ENCODE measurements at regions of chr20 and their contacts with region 1.

Region 1: DNA sequence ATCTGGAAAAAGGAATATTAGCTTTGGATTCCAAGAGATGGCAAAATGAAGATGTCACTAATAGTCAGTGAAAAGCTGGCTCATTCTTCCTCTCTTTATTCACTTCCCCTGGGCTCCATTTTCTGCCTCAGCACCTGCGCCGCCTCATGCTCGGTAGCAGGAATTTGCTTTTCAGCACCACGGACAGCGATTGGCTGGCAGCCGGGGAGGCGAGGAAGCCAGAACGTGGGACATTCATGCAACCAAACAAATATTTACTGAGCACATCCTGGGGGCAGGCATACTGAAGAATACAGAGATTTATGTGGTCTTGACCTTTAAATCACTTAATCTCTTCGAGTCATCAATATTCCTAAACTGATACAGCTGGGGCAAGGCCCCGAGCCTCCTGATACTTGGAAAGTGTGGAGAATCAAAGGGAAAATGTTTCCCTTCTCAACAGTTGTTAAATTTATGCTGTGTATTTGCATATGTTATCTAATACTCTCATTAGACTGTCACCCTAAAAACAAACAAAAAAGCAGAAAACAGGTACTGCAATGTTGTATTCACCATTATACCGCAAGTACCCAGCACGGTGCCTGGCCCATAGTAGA is 12.1 kb upstream of the PDYN start:
- DNase-seq: peak in 1 of 2 experiments; percentile 55
- ATAC-seq: peak in 1 of 2 experiments; percentile 65; a peak in 3 of 6 replicates
- H3K4me3 ChIP-seq: no peak overlapping the region
- H3K27ac ChIP-seq: no peak overlapping the region
- H3K4me1 ChIP-seq: no peaks in the 10 kb centered on the region
- CTCF ChIP-seq: no peak
- EP300 ChIP-seq: no peak
- POLR2A ChIP-seq: no peak
- RAD21 ChIP-seq: no peak

Region 2: DNA sequence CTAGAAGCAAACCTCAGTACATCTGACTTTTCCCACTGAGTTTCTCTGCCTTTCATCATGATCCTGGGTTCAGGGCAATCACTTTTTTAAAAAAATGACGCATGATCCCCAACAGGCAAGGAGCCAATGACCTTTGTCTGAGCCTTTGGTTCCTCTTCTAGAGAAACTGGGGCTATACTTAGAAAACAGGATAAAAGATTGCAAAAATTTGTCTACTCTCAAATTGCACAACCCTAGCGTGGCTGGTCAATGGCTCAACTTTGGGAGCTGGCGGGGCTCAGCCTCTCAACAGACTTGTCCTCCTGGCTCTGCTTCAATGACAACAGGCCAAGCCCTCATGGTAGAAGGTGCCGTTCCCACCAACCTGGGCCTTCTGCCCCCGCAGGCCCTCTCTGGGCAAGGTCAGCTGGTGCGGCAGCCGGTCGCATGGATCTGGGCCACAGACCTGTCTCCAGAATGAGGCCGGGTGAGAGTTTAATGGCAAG is 60.8 kb before region 1 on chr20:
- CTCF ChIA-PET with region 1: no interaction called
- POLR2A ChIA-PET with region 1: no interaction called
- DNase-seq: no peak
- ATAC-seq: no peak
- H3K4me3 ChIP-seq: no peak overlapping the region
- H3K27ac ChIP-seq: no peak overlapping the region
- H3K4me1 ChIP-seq: no peaks in the 10 kb centered on the region
- CTCF ChIP-seq: no peak
- EP300 ChIP-seq: no peak
- POLR2A ChIP-seq: no peak
- RAD21 ChIP-seq: no peak

Region 3: DNA sequence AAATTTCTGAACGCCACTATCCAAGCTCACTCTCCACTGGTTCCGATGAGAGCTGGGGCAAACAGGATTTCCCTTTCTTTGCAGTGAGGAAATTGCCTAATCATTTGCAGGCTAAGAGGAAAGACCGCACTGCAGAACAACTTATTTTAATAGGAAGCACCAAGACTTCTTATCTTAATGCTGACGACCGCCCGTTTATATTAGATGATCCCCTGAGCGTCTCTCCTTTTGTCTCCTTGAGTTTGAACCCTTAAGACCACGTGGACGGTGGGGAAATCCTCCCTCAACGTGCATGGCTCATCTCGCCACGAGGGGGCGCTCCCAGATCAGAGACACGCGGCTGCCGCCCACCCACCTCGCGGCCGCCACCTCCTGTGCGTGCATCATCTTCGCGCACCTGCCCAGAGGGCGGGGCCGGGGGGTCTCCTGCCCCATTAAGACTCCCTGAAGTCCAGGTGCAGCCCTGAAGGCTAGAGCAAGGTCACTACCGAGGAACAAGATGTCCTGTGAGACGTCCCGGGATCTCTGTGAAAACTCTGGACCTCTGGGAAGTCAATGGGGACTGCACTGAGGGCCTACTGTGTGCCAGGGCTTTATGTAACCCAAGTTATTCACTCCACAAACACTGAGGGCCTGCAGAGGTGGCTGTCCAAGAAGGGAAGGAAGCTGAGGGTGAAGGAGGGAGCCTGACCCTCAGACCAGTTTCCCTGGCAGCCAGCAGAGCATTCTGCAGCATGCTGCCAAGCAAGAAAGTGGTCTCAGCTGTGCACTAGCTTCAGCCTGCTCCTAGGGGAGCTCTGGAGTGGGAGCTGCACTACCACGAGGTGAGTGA is 40.2 kb before region 1 on chr20:
- CTCF ChIA-PET with region 1: interaction called, 30 read pairs
- POLR2A ChIA-PET with region 1: no interaction called
- DNase-seq: peak; percentile 80 to 84
- ATAC-seq: peak; percentile 81 to 93
- H3K4me3 ChIP-seq: no peak overlapping the region
- H3K27ac ChIP-seq: peak overlapping the region; percentile 24 to 31; a peak in 3 of 6 replicates
- H3K4me1 ChIP-seq: 0 out of 3 replicates have a peak, but pooled peaks cover 6% of the 10 kb centered on the region
- CTCF ChIP-seq: peak; percentile 99
- EP300 ChIP-seq: no peak
- POLR2A ChIP-seq: no peak
- RAD21 ChIP-seq: peak; percentile 93 to 95

Region 4: DNA sequence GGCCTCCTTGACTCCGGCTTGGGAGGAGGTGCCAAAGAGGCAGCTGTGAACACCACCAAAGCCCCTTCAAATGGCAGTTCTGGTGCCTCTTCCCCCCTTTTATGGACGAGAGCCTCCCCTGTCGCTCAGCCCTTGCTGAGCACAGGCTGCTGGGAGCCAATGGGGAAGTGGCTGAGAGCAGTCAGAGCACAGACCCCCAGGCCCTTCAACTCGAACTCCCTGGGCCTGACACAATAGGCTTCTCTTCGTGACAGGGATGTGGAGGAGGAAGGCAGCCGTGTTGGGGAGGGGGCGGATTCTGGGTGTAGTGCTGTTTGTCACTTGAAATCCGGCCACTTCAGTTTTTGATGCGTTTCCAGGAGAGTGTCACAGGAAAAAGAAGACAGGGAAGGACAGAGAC is 11.9 kb before region 1 on chr20 and contains the start of gene PDYN:
- CTCF ChIA-PET with region 1: interaction called, 45 read pairs
- POLR2A ChIA-PET with region 1: no interaction called
- DNase-seq: no peak
- ATAC-seq: no peak
- H3K4me3 ChIP-seq: no peak within 1 kb of the TSS
- H3K27ac ChIP-seq: no peak within 1 kb of the TSS
- H3K4me1 ChIP-seq: no peaks in the 10 kb centered on the region
- CTCF ChIP-seq: no peak
- EP300 ChIP-seq: no peak
- POLR2A ChIP-seq: no peak
- RAD21 ChIP-seq: no peak
- polyA plus RNA-seq, gene PDYN: not detected in 2 replicates

Region 5: DNA sequence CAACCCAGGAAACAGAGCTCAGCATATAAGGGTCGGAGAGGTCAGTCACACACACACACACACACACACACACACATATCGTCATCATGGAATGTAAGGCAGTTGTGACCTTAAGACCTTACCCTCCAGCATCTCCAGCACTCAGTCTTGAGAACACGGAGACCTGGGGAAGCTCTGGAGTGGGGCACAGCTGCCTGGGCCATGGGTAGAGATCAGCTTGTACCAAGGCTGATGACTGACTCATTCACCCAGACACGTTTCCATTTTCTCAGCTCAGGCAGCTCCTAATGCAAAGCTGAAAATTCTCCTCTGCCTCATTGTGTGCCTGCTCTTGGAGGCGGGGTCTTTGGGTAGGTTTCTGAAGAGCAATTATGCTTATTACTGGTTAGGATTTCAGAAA is 26.2 kb after region 1 on chr20:
- CTCF ChIA-PET with region 1: interaction called, 11 read pairs
- POLR2A ChIA-PET with region 1: no interaction called
- DNase-seq: no peak
- ATAC-seq: no peak
- H3K4me3 ChIP-seq: no peak overlapping the region
- H3K27ac ChIP-seq: no peak overlapping the region
- H3K4me1 ChIP-seq: no peaks in the 10 kb centered on the region
- CTCF ChIP-seq: no peak
- EP300 ChIP-seq: no peak
- POLR2A ChIP-seq: no peak
- RAD21 ChIP-seq: no peak

Region 6: GRCh38 chr20:2051946-2052345 is 46.0 kb after region 1 on chr20:
- CTCF ChIA-PET with region 1: interaction called, 13 read pairs
- POLR2A ChIA-PET with region 1: no interaction called
- DNase-seq: peak in 1 of 2 experiments; percentile 13
- ATAC-seq: no peak
- H3K4me3 ChIP-seq: no peak overlapping the region
- H3K27ac ChIP-seq: no peak overlapping the region
- H3K4me1 ChIP-seq: no peaks in the 10 kb centered on the region
- CTCF ChIP-seq: no peak
- EP300 ChIP-seq: no peak
- POLR2A ChIP-seq: no peak
- RAD21 ChIP-seq: no peak

Region 7: DNA sequence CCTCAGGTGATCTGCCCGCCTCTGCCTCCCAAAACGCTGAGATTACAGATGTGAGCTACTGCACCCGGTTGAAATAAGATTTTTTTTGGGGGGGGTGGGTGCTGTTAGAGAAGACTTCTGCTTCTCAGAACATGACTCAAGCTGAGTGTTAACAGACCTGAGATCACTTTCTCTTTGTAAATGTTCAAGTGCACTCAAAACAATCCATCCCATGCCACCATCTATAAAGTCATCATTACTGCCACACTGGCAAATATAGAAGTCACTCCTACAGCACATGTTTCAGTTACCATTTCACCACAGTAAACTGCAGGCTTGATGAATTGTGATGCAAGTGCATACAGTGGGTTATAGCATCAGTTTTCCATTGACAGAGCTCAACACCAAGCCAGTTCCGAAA is 843.6 kb after region 1 on chr20:
- CTCF ChIA-PET with region 1: no interaction called
- POLR2A ChIA-PET with region 1: no interaction called
- DNase-seq: no peak
- ATAC-seq: no peak
- H3K4me3 ChIP-seq: no peak overlapping the region
- H3K27ac ChIP-seq: no peak overlapping the region
- H3K4me1 ChIP-seq: no peaks in the 10 kb centered on the region
- CTCF ChIP-seq: no peak
- EP300 ChIP-seq: no peak
- POLR2A ChIP-seq: no peak
- RAD21 ChIP-seq: no peak

Measured in A549 (cell line).